B cell (primary cell): ENCODE measurements at regions of chr1 and their contacts with region 1.

Region 1: GRCh38 chr1:106492880-106493279 is 563.6 kb upstream of the PRMT6 start:
- DNase-seq: no peak
- ATAC-seq: no peak
- H3K4me3 ChIP-seq: no peak overlapping the region
- H3K4me3 Mint-ChIP-seq: no peak overlapping the region
- H3K27ac ChIP-seq: no peak overlapping the region
- H3K27ac Mint-ChIP-seq: no peak overlapping the region
- H3K4me1 ChIP-seq: no peaks in the 10 kb centered on the region
- H3K4me1 Mint-ChIP-seq: no peaks in the 10 kb centered on the region
- H3K27me3 ChIP-seq: no peaks in the 10 kb centered on the region
- H3K27me3 Mint-ChIP-seq: no peaks in the 10 kb centered on the region
- CTCF ChIP-seq: no peak

Region 2: GRCh38 chr1:106504675-106505074 is 11.8 kb after region 1 on chr1:
- CTCF ChIA-PET with region 1: no interaction called
- POLR2A ChIA-PET with region 1: no interaction called
- intact Hi-C with region 1: loop called (anchors 1 kb)
- DNase-seq: no peak
- ATAC-seq: no peak
- H3K4me3 ChIP-seq: no peak overlapping the region
- H3K4me3 Mint-ChIP-seq: no peak overlapping the region
- H3K27ac ChIP-seq: no peak overlapping the region
- H3K27ac Mint-ChIP-seq: no peak overlapping the region
- H3K4me1 ChIP-seq: no peaks in the 10 kb centered on the region
- H3K4me1 Mint-ChIP-seq: no peaks in the 10 kb centered on the region
- H3K27me3 ChIP-seq: no peaks in the 10 kb centered on the region
- H3K27me3 Mint-ChIP-seq: no peaks in the 10 kb centered on the region
- CTCF ChIP-seq: no peak